ENCODE measurements at regions of chr2 and their contacts with region 1.

Region 1: DNA sequence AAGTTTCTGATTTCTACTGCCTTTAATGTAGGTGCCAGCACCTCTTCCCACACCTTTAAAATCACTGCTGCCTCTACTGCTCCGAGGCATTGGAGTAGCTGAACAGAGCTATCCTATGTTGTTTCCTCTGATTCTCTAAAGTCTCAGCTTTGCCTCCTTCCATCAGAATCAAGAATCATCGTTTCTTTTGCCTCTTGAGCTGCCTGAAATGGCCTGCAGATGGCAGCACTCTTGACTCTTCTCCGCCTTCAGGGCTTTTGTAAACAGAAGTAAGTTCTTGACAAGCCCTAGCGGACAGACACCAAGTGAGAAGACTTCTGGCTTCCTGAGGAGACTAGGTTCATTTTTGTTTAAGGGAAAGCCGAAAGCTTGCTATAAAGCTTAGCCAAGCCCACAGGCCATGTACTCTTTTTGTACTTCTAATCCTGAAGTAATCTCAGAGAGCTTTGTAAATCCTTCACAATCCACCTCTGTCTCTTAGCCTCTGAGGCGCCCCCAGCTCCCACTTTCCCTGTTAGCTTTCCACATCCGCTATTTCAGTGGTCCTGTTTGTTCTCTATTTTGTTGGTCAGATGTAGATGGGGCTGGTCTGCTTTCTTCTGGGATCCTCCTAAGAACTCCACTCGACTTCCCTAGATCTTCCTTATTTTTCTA is 48.4 kb downstream of the GTF3C3 start:
- DNase-seq: peak; percentile 44
- H3K4me3 ChIP-seq: no peak overlapping the region
- H3K27ac ChIP-seq: no peak overlapping the region
- H3K27me3 ChIP-seq: no peaks in the 10 kb centered on the region
- CTCF ChIP-seq: peak; percentile 89

Region 2: GRCh38 chr2:196696423-196697079 is 54.6 kb before region 1 on chr2:
- CTCF ChIA-PET with region 1: interaction called, 11 read pairs
- POLR2A ChIA-PET with region 1: no interaction called
- DNase-seq: no peak
- H3K4me3 ChIP-seq: no peak overlapping the region
- H3K27ac ChIP-seq: no peak overlapping the region
- H3K27me3 ChIP-seq: no peaks in the 10 kb centered on the region
- CTCF ChIP-seq: no peak

Region 3: DNA sequence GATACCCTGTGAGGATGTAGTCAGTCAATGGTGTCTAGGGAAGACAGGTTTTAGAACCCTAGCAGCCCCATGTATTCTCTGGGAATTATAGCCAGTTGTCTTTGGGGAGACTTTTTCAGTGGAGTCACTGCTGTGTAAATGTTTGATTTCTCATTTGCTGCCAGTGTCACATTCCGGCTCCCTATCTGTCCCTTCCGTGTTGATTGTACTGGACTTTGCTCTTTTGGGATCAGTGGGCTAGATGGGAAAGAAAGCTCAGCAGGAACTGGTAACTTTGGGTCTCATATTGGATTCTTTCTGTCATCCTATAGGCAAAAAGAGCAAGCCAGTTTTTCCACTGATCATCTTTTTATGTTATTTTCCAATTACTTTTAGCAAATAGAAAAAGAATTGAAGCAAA is 21.7 kb before region 1 on chr2:
- CTCF ChIA-PET with region 1: interaction called, 15 read pairs
- POLR2A ChIA-PET with region 1: no interaction called
- DNase-seq: no peak
- H3K4me3 ChIP-seq: no peak overlapping the region
- H3K27ac ChIP-seq: no peak overlapping the region
- H3K27me3 ChIP-seq: no peaks in the 10 kb centered on the region
- CTCF ChIP-seq: no peak

Region 4: GRCh38 chr2:196737046-196737445 is 14.1 kb before region 1 on chr2:
- CTCF ChIA-PET with region 1: interaction called, 17 read pairs
- POLR2A ChIA-PET with region 1: no interaction called
- DNase-seq: no peak
- H3K4me3 ChIP-seq: no peak overlapping the region
- H3K27ac ChIP-seq: no peak overlapping the region
- H3K27me3 ChIP-seq: no peaks in the 10 kb centered on the region
- CTCF ChIP-seq: no peak

Region 5: DNA sequence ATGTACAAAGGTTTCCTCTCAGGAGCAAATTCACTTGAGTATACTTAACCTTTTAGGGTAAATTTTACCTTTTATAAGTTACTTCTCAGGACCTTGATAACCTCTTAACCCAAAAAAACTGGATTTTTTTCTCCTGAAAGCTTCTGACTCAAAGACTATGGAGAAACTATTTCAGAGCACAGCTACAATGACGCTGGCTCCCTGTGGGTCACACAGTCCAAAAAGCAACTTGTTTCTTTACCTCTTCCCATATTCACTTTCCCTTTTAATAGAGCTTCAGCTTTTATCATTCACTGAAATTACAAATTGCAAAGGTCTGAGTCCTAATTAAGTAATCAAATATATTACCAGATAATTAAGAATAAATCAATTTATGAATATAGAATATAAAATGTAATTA is 16.0 kb after region 1 on chr2:
- CTCF ChIA-PET with region 1: interaction called, 49 read pairs
- POLR2A ChIA-PET with region 1: no interaction called
- DNase-seq: no peak
- H3K4me3 ChIP-seq: no peak overlapping the region
- H3K27ac ChIP-seq: no peak overlapping the region
- H3K27me3 ChIP-seq: no peaks in the 10 kb centered on the region
- CTCF ChIP-seq: no peak